Sigmoid colon (tissue), 7 donors: ENCODE measurements at regions of chr1 and their contacts with region 1.

Region 1: DNA sequence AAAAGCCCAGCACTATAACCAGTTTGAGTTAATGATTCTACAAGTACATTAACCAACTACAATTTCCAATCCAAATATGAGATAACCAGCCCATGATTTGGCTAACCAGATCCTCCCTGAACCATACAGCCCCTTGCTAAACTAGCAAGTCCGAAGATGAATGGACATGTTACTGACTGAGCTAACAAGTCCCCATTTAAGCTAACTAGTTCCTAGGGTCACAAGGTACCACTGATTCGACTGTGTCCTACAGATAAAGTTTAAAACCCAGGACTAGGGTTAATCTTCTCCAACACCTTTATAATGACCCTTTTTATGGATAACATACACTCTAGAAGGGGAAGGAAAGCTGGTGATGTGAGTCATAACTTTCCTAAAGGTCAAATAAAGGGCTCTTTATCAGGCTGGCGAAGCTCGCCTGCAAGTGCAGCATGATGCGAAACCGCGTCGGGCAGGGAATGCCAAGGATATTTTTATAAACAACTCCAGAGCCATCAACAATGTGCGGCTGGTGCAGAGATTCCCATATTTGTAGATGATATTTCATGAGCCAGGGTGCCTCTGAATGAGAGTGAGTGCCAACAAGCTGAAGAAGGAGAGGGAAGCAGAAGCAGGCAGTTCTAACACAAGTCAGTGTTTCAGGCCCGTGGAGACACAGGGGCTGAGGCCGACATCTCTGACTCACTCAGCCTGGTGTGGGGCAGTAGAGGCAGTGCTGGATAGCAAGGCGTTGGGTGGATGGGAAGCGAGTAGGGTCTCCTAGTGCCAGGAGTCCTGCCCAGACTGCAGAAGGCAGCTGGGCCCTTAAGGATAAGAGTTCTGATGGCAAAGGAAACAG is 75.6 kb upstream of the ROR1 start:
- DNase-seq: peak; percentile 89
- H3K4me3 ChIP-seq: no peak overlapping the region
- H3K27ac ChIP-seq: peak overlapping the region; percentile 51 to 85 (median 80)
- H3K4me1 ChIP-seq: peaks cover 0 to 44% (median 32%) of the 10 kb centered on the region in 4 donors
- H3K27me3 ChIP-seq: no peaks in the 10 kb centered on the region
- CTCF ChIP-seq: no peak
- EP300 ChIP-seq: peak; percentile 49 to 89 (median 74)
- POLR2A ChIP-seq: no peak

Region 2: DNA sequence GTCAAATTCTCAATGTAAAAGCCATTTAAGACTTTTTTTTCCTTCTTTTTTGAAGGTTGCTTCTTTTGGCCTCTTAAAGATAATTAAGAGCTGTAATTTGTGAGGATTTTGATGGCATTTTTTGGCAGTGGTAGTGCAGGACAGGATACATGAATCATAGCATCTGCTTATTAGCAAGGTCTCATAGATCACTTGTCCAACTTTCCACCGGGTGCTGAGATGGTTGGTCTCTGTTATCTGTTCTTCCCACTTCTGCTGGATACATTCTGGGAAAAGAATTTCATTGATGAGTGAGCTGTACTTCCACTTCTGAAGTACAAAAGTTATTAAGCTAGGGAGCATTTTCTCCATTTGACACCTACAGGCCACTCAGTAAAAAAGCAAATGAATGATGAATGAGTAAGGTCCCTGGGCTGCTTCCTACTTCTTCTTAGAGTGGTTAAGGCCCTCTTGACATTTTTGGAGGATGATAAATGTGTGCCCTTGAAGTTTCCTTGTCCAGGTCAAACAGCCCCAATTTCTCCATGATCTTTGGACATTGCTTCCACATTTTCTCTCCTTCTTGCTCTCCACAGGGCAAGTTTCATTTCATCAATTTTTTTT is 176.2 kb after region 1 on chr1:
- intact Hi-C with region 1: loop called (anchors 5 kb)
- DNase-seq: no peak
- H3K4me3 ChIP-seq: no peak overlapping the region
- H3K27ac ChIP-seq: peak overlapping the region in 3 of 4 donors; percentile 41 to 69 (median 62)
- H3K4me1 ChIP-seq: peaks cover 0 to 85% (median 58%) of the 10 kb centered on the region in 4 donors
- H3K27me3 ChIP-seq: no peaks in the 10 kb centered on the region
- CTCF ChIP-seq: no peak
- EP300 ChIP-seq: no peak
- POLR2A ChIP-seq: no peak

Region 3: GRCh38 chr1:63917571-63918417 is 219.6 kb after region 1 on chr1:
- intact Hi-C with region 1: loop called (anchors 5 kb)
- DNase-seq: no peak
- H3K4me3 ChIP-seq: no peak overlapping the region
- H3K27ac ChIP-seq: no peak overlapping the region
- H3K4me1 ChIP-seq: peaks cover 0 to 52% (median 43%) of the 10 kb centered on the region in 4 donors
- H3K27me3 ChIP-seq: no peaks in the 10 kb centered on the region
- CTCF ChIP-seq: peak in 1 of 4 experiments; percentile 9
- EP300 ChIP-seq: no peak
- POLR2A ChIP-seq: no peak

Region 4: DNA sequence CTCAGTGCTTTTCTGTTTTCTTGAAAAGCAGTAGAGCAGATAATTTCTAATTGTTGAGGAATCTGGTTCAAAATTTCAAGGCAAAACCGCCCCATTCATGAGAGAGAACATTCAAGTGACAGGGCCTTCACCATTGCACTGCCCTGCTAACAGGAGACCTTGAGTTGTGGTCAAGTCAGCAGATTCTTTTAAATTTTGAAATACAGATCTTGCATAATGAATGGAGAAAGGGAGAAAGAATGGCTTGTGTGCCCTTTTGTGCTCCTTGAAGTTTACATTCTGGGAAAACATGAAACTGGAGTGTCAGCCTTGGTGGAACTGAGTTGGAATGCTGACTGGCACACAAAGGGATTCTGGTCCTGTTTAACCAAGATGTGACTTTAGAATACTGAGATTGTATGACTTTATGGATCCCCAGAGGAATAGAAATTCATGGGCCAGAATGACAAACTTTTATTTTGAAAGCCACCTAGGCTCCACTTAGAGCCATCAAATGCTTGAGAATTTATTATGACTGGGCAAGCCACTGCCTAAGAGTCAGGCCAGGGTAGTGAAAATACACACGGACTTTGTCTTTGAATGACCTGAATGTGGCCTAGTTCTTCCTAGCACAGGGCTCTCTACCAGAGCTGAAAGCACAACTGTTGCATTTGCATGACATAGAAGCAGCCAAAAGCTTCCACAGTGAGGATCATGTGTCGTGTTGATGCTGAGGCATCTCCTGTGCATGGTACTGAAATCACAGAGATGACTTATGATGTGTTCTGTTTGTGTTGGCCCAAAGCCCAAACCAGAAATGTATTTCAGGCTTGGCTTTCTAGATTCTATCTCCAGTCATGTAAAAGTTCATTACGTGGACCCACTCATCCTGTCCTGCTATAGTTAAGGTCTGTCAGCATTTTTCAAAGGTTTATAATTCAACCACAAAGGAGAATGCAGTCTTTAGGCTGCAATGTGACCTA is 341.0 kb after region 1 on chr1:
- intact Hi-C with region 1: loop called (anchors 5 kb)
- DNase-seq: peak; percentile 77
- H3K4me3 ChIP-seq: no peak overlapping the region
- H3K27ac ChIP-seq: peak overlapping the region in 3 of 4 donors; percentile 44 to 63 (median 52)
- H3K4me1 ChIP-seq: peaks cover 0 to 57% (median 47%) of the 10 kb centered on the region in 4 donors
- H3K27me3 ChIP-seq: no peaks in the 10 kb centered on the region
- CTCF ChIP-seq: no peak
- EP300 ChIP-seq: no peak
- POLR2A ChIP-seq: no peak